GM13977 (cell line): ENCODE measurements at regions of chr4 and their contacts with region 1.

Region 1: DNA sequence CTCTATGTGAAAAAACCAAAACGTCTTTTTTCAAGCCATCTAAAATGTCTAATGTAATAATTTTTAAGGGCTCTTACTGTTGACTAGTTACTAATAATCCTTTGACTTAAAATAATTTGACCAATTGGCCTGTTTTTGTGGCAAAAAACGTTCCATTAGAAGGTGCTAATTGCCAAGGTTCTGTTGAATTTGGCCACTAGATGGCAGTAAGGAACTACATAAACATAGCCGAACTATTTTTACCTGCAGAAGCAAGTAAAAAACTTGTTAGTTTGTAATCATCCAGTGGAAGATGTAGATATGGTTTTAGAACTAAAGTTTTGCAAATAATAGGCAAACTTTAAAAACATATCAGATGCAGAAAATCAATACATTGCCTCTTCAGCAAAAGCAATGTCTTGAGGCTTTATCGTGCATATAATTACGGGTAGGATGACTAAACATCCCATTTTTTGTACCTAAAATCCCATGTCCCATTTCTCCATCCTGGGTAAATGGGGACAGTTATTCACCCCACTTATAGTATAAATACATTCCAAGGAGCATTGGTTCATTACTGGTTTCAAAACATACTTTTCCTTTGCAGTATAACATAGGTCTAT is 57.6 kb downstream of the PROM1 start:
- DNase-seq: peak; percentile 61
- CTCF ChIP-seq: peak; percentile 75

Region 2: DNA sequence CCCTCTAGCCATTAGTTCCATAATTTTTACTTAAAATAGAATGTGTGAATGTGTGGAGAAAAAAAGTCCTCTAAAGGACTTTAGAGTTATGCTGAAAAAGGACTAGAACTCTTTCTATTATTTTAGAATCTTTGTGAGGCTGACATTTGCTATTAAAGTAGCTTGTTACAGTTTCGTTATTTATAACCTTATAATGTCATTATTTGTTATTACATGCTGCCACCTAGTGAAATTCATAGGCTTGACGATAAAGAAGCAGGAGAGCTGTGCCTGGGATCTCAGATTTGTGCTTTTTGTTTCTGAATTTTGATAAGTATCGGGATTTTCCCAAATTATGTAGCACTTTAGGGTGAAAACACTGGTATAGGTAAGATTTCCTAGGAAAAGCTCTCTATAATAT is 238.5 kb after region 1 on chr4:
- in situ Hi-C with region 1: loop called (anchors 25 kb)
- DNase-seq: peak; percentile 37
- CTCF ChIP-seq: peak; percentile 53

Region 3: GRCh38 chr4:16443504-16444088 is 417.3 kb after region 1 on chr4:
- in situ Hi-C with region 1: loop called (anchors 25 kb)
- DNase-seq: peak; percentile 40
- CTCF ChIP-seq: peak; percentile 67